OCI-LY7 (cell line): ENCODE measurements at regions of chr14 and their contacts with region 1.

Region 1: GRCh38 chr14:49971156-49972130 is 78.6 kb downstream of the ARF6 start:
- DNase-seq: peak; percentile 97
- H3K4me3 ChIP-seq: peak overlapping the region; percentile 65
- H3K27ac ChIP-seq: peak overlapping the region; percentile 99
- H3K4me1 ChIP-seq: peaks cover 81% of the 10 kb centered on the region
- CTCF ChIP-seq: no peak

Region 2: DNA sequence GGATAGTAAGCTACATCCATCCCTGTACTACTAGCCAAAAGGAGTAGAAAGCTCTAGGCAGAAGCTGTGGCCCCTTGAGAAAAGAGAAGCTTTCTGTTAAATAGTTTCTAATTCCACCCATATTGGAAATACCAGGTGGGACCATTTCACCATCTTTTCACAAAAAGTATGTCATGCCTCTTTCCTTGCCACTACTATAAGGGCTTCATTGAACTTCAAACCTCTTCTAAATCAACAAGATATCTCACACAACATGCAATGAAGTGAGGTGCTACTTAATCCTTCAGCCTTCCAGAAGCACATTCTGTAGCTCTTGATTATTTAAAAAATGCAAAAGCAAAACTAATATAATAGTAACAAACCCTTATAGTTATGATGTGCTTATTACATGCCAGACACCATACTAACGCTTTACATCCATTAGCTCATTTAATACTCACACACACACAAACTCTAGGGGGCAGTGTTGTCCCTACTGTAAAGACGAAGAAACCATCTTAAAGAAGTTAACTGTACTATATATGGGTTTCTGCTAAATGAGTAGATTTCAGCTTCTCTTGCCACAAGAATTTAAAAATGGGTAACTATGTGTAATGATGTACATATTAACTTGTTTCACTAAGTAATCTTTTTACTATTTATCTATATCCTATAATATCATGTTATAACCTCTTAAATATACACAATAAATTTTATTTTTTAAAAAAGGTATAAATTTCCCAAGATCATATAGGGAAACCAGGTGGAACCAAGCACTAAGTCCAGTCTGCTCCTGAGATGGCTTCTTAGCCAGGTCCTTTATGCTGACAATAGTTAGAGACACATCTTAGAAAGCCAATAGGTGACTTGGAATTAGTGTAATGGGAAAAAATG is 509.7 kb before region 1 on chr14:
- CTCF ChIA-PET with region 1: no interaction called
- POLR2A ChIA-PET with region 1: no interaction called
- intact Hi-C with region 1: no loop called
- DNase-seq: peak; percentile 83
- H3K4me3 ChIP-seq: no peak overlapping the region
- H3K27ac ChIP-seq: no peak overlapping the region
- H3K4me1 ChIP-seq: no peaks in the 10 kb centered on the region
- CTCF ChIP-seq: peak; percentile 94

Region 3: DNA sequence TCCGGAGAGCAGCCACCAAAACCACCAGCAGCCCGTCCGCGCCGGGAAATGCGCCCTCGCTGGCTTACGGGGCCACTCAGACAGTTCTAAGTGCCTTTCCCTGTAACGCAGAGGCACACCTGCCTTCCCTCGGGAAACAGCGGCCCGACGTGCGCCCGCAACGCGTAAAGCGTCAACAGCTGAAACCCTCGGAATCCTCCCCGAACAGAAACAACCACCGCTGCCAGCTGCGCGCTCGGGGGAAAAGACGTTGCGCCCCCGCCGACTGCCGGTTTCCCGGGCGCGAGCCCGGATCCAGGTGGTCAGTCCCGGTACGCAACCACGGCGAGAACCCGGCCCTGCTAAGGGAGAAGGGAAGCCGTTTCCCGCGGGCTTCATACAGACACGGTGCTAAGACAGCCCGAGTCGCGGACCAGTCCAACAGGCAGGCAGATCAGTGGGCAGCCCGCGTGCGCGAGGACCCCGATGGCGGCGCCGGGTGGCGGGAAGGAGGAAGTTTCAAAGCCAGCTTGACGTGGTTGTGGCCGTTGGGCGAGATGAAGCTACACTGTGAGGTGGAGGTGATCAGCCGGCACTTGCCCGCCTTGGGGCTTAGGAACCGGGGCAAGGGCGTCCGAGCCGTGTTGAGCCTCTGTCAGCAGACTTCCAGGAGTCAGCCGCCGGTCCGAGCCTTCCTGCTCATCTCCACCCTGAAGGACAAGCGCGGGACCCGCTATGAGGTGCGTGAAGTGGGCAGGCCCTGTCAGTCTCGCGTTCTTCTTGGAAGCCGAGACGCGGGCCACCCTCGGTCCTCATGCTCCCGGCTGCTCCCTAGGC is 372.8 kb before region 1 on chr14 and contains the start of gene LRR1:
- CTCF ChIA-PET with region 1: no interaction called
- POLR2A ChIA-PET with region 1: interaction called, 3 read pairs
- intact Hi-C with region 1: loop called (anchors 10 kb)
- DNase-seq: peak; percentile 88
- H3K4me3 ChIP-seq: peak within 1 kb of the TSS; percentile 99
- H3K27ac ChIP-seq: peak within 1 kb of the TSS; percentile 94
- H3K4me1 ChIP-seq: peaks cover 40% of the 10 kb centered on the region
- CTCF ChIP-seq: no peak
- total RNA-seq, gene LRR1: 83.4 and 89.8 TPM in 2 replicates

Region 4: DNA sequence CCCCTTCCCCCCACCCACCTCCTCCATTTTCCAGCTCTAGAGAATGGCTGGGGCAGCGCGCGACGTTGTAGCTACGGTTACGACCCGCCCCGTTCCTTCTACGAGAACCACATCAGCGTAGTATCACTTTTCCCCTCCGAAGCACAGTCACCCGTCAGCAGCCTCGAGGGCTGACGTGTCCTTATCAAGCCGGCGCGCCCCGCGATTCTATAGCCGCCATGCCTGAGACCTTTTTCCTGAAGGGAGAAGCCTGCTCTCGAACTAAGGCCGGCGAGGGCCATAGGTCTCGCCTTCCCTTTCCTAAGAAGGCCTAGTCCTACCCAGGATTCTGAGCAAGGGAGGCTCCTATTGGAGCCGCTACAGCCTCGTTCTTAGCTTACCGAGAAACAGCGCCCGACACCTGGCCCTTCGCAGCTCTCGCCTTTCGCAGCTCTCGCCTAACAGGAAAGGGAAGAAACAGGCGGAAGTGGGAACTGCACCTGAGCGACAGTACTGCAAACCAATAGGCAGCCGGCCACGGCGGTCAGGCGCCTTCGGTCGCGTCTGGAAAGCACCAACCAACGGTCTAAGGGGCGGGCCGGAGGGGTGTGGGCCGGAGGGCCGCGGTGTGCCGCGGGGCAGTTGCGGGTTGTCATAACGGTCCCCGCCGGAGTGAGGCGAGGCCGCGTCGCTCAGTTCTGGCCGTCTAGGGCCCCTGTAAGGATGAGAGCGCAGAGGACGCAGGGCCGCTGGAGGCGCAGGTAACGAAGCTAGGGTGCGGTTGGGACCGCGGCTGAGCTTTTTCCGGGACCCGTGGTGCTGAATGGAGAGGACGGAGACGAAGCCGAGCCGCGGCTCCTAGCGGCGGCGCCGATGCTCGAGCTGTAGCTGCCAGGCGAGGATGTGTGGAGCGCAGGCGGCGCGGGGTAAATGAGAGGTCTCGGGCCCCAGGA is 351.0 kb before region 1 on chr14 and contains the starts of genes MGAT2 and RPL36AL:
- CTCF ChIA-PET with region 1: no interaction called
- POLR2A ChIA-PET with region 1: no interaction called
- intact Hi-C with region 1: loop called (anchors 5 kb)
- DNase-seq: peak; percentile 99
- H3K4me3 ChIP-seq: peak within 1 kb of the TSS; percentile 88
- H3K27ac ChIP-seq: peak within 1 kb of the TSS; percentile 85
- H3K4me1 ChIP-seq: peaks cover 51% of the 10 kb centered on the region
- CTCF ChIP-seq: peak; percentile 33
- total RNA-seq, gene MGAT2: 79.3 and 83.5 TPM in 2 replicates
- total RNA-seq, gene RPL36AL: 257 and 441 TPM in 2 replicates

Region 5: DNA sequence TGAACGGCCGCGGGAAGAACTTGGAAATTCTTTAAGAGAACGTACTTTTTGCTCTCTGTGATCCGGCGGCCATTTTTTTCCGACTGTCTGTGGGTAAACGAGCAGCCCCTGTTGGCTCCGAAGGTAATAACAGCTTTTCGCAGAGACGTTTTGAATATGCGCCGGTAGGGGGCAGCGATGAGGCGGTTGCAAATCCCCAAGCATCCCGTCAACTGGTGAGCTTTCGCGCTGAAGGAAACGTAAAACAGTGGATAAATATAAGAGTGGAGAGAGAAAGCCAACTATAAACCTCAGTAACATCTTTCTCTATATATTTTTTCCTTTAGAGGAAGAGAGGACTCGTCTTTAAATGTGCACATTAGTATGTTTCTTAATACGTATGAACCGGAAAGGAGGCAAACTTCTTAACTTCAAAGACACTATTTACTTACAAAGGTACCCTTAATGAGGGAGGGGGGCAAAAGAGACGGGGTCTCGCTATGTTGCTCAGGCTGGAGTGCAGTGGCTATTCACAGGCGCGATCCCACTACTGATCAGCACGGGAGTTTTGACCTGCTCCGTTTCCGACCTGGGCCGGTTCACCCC is 109.3 kb before region 1 on chr14:
- CTCF ChIA-PET with region 1: interaction called, 4 read pairs
- POLR2A ChIA-PET with region 1: interaction called, 71 read pairs
- intact Hi-C with region 1: loop called (anchors 2 kb)
- DNase-seq: peak; percentile 89
- H3K4me3 ChIP-seq: peak overlapping the region; percentile 75
- H3K27ac ChIP-seq: peak overlapping the region; percentile 83
- H3K4me1 ChIP-seq: peaks cover 52% of the 10 kb centered on the region
- CTCF ChIP-seq: peak; percentile 100

Region 6: GRCh38 chr14:49892636-49893308 is 78.7 kb before region 1 on chr14 and contains the start of gene ARF6:
- CTCF ChIA-PET with region 1: no interaction called
- POLR2A ChIA-PET with region 1: interaction called, 24 read pairs
- intact Hi-C with region 1: loop called (anchors 1 kb)
- DNase-seq: peak; percentile 99
- H3K4me3 ChIP-seq: peak within 1 kb of the TSS; percentile 98
- H3K27ac ChIP-seq: peak within 1 kb of the TSS; percentile 91
- H3K4me1 ChIP-seq: peaks cover 26% of the 10 kb centered on the region
- CTCF ChIP-seq: no peak
- total RNA-seq, gene ARF6: 47.6 and 51.0 TPM in 2 replicates

Region 7: DNA sequence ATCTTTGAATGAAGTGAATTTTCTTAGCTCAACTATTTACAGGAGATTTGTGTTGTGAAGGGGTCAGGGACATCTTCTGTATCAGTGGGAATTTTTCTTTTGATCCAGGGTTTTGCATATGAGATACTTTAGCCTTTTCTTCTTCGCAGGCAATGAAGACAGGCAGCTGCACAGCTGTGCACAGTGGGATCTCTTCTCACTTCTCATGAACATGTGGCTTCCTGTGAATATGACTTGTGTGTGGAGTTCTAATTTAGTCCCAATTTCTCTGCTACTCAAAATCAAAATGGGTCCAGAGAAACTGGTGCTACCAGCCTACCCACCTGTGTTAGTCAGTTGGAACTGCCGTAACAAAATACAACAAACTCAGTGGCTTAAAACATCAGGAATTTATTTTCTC is 40.7 kb before region 1 on chr14:
- CTCF ChIA-PET with region 1: no interaction called
- POLR2A ChIA-PET with region 1: interaction called, 9 read pairs
- intact Hi-C with region 1: loop called (anchors 2 kb)
- DNase-seq: peak; percentile 68
- H3K4me3 ChIP-seq: no peak overlapping the region
- H3K27ac ChIP-seq: peak overlapping the region; percentile 79
- H3K4me1 ChIP-seq: peaks cover 38% of the 10 kb centered on the region
- CTCF ChIP-seq: no peak

Region 8: DNA sequence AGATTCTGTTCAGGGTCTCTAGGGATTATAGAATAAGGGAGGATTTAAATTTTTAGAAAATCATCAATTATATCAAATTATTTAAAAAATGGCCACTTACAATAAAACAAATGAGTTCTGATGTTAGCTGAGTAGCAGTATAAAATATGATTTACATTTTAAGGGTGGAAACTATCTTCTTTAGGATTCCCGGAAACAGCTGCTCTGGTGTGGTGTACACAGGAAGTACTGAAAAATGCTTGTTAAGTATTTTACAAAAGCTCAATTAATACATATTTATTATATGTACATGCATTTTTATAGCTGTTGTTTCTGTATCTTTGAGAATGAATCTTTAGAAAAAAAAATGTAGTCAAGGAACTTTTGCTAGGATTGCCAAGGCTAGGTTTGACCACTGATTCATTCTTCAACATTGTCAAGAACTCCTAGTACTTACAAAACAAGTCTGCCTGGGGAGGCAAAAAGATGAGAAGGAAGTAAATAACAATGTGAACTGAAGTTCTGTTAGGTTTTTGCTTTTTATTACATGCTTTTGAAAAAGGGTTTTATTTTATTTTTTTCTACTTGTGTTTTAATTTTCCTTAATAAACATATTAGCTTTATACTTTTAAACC is 30.5 kb before region 1 on chr14:
- CTCF ChIA-PET with region 1: no interaction called
- POLR2A ChIA-PET with region 1: interaction called, 28 read pairs
- intact Hi-C with region 1: no loop called
- DNase-seq: peak; percentile 66
- H3K4me3 ChIP-seq: peak overlapping the region; percentile 16
- H3K27ac ChIP-seq: peak overlapping the region; percentile 55
- H3K4me1 ChIP-seq: peaks cover 25% of the 10 kb centered on the region
- CTCF ChIP-seq: no peak